Activated CD4-positive, alpha-beta memory T cell treated with anti-CD3 and anti-CD28 coated beads for 36 hours (primary cell): ENCODE measurements at regions of chr14 and their contacts with region 1.

Region 1: DNA sequence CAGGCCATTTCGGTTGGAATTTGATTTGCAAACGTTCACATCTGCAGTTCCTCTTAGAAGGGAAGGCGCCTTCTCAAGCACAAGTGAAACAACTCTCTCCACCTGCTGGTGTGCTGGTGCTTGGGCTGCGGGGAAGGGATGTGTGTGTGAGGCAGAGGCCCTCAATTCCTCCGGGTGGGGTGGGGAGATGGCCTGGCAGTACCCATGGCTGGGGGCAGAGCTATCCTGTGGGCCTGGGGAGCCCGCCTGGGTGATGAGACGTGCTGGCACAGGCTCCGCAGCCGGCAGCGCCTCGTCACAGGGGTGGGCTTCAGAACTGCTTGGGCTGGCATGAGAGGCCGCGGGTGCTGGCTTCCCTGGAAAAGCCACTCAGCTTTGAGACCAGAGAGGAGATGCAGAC is 28.9 kb upstream of the TDRD9 start:
- DNase-seq: no peak
- H3K4me3 Mint-ChIP-seq: no peak overlapping the region
- H3K27ac Mint-ChIP-seq: no peak overlapping the region
- H3K4me1 Mint-ChIP-seq: peaks cover 3% of the 10 kb centered on the region
- H3K27me3 Mint-ChIP-seq: no peaks in the 10 kb centered on the region

Region 2: GRCh38 chr14:103688906-103689902 is 210.1 kb before region 1 on chr14:
- CTCF ChIA-PET with region 1: no interaction called
- POLR2A ChIA-PET with region 1: no interaction called
- intact Hi-C with region 1: no loop called
- DNase-seq: no peak
- H3K4me3 Mint-ChIP-seq: no peak overlapping the region
- H3K27ac Mint-ChIP-seq: no peak overlapping the region
- H3K4me1 Mint-ChIP-seq: no peaks in the 10 kb centered on the region
- H3K27me3 Mint-ChIP-seq: no peaks in the 10 kb centered on the region

Region 3: GRCh38 chr14:103880348-103881267 is 18.7 kb before region 1 on chr14:
- CTCF ChIA-PET with region 1: interaction called, 18 read pairs
- POLR2A ChIA-PET with region 1: no interaction called
- intact Hi-C with region 1: no loop called
- DNase-seq: peak; percentile 17
- H3K4me3 Mint-ChIP-seq: peak overlapping the region; percentile 53
- H3K27ac Mint-ChIP-seq: no peak overlapping the region
- H3K4me1 Mint-ChIP-seq: peaks cover 9% of the 10 kb centered on the region
- H3K27me3 Mint-ChIP-seq: no peaks in the 10 kb centered on the region

Region 4: DNA sequence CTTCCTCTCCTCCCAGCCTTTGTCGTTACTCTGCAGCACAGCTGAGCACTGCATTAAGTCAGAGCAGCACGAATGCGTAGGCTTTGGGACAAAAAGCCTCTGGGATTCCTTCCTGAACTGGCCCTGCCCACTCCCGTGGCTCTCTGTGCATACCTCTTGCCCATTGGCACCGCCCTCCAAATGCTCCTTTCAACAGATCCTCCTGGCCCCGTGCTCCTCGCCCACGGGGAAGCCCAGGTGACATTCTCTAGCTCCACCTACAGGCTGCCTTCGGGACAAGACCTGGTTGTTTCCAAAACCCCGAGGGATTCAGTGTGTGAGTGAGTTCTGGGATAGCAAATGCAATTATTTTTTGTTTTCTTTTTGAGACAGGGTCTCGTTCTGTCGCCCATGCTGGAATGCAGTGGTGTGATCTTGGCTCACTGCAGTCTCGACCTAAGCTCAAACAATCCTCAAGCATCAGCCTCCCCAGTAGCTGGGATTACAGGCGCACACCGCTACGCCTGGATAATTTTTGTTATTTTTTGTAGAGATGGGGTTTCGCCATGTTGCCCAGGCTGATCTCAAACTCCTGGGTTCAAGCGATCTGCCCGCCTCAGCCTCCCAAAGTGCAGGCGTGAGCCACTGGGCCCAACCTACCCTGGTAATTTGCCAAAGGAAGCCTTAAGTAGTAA is 11.1 kb after region 1 on chr14:
- CTCF ChIA-PET with region 1: interaction called, 59 read pairs
- POLR2A ChIA-PET with region 1: no interaction called
- intact Hi-C with region 1: no loop called
- DNase-seq: peak; percentile 81
- H3K4me3 Mint-ChIP-seq: peak overlapping the region; percentile 27
- H3K27ac Mint-ChIP-seq: peak overlapping the region; percentile 61
- H3K4me1 Mint-ChIP-seq: peaks cover 4% of the 10 kb centered on the region
- H3K27me3 Mint-ChIP-seq: no peaks in the 10 kb centered on the region

Region 5: DNA sequence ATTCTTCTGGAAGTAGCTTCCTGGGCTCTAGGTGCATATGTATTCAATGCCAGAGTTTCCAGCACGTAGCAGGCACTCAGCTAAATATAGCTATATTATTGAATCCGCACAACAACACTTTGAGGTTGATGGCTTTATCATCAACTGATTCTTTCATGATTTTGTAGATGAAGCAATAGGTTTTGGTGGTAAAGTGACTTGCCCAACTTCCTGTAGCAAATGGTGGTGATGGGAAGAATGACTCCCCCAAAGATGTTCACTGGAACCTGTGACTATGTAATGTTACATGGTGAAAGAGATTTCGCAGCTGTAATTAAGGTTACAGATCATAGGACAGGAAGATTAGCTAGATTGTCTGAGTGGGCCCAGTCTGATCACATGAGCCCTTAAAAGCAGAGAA is 32.1 kb after region 1 on chr14:
- CTCF ChIA-PET with region 1: interaction called, 11 read pairs
- POLR2A ChIA-PET with region 1: no interaction called
- intact Hi-C with region 1: no loop called
- DNase-seq: no peak
- H3K4me3 Mint-ChIP-seq: no peak overlapping the region
- H3K27ac Mint-ChIP-seq: peak overlapping the region; percentile 46
- H3K4me1 Mint-ChIP-seq: no peaks in the 10 kb centered on the region
- H3K27me3 Mint-ChIP-seq: no peaks in the 10 kb centered on the region

Region 6: GRCh38 chr14:104450811-104451401 is 551.6 kb after region 1 on chr14:
- CTCF ChIA-PET with region 1: no interaction called
- POLR2A ChIA-PET with region 1: no interaction called
- intact Hi-C with region 1: no loop called
- DNase-seq: no peak
- H3K4me3 Mint-ChIP-seq: no peak overlapping the region
- H3K27ac Mint-ChIP-seq: no peak overlapping the region
- H3K4me1 Mint-ChIP-seq: no peaks in the 10 kb centered on the region
- H3K27me3 Mint-ChIP-seq: peaks cover 38% of the 10 kb centered on the region